Right ventricle myocardium superior (tissue), 1 donor: ENCODE measurements at regions of chr1 and their contacts with region 1.

Region 1: DNA sequence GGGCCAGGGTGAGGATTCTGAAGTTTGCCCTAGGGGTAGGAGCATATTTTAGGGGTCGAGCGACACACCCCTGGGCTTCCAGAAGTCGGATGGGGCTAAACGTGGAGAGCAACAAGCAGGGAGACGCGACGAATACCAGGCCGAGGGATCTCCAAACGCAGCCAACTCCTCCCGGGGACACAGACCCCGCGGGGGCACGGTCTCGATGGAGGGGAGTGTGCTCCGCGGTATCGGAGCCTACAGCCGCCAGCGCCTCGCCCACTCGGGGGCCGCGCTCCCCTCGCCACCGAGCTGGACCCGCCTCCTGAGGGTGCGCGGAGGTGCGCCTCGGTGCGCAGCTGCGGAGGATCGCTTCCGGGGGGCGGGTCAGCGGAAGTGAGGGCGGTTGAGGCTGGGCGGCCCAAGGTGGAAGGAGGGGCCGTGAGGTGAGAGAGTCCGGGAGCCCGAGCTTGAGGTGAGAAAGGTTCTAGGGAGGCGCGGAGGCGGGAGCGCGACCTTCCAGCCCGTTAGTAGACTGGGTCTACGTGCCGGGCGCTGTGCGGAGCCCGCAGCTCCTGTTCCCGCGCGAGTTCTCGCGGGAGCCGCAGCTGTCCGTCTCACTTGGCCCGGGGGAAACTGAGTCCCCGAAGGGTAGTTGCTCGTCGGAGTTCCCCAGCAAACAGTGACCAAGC is at the start of gene MTFR1L:
- DNase-seq: peak; percentile 93
- ATAC-seq: peak; percentile 93
- total RNA-seq, gene MTFR1L: 222 TPM

Region 2: DNA sequence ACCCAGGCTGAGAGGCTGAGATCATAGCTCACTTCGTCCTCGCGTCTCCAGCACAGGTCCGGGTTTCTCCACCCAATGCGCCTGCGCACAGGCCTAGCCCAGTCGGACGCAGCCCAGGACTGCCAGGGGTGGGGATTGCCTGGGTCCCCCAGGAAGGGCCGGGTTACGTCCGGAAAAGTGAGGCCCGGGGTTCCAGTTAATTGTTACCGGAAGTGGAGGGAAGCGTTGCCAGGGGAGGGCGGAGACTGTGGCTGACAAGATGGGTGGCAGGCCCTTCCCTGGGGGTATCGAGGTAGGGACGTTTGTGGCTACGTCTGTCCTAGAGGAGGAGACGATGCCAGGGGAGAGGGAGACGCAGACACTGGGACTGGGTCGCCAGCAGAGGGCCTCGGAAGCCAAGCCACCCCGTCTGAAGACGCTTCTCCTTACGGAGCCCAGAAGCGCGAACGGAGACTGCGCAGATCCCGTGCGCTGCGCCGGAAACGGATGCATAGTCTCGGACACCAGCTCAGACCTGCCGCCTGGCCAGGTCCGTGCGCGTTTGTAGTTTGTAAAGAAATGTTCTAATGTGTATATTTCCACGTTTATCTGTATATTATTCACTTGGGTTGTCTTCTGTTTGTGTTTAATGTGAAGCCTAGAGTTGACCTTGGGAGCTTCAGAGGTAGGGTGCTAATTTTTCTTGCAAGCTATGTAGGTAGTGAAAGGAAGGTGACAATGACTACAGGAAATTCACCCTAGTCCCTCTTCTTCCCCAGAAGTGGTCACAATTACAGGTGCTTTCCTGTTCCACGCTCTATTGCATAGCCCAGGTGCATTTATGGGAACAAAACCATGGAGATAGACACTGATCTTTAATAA is 579.8 kb before region 1 on chr1:
- intact Hi-C with region 1: loop called (anchors 10 kb)
- DNase-seq: peak; percentile 95
- ATAC-seq: peak; percentile 92